ENCODE measurements at regions of chr6 and their contacts with region 1.

Region 1: GRCh38 chr6:108630050-108630714 is 69.5 kb downstream of the FOXO3 start:
- DNase-seq: no peak
- H3K4me3 Mint-ChIP-seq: peak overlapping the region; percentile 0
- H3K27ac Mint-ChIP-seq: peak overlapping the region; percentile 26
- H3K4me1 Mint-ChIP-seq: peaks cover 34% of the 10 kb centered on the region
- H3K27me3 Mint-ChIP-seq: peaks cover 11% of the 10 kb centered on the region

Region 2: DNA sequence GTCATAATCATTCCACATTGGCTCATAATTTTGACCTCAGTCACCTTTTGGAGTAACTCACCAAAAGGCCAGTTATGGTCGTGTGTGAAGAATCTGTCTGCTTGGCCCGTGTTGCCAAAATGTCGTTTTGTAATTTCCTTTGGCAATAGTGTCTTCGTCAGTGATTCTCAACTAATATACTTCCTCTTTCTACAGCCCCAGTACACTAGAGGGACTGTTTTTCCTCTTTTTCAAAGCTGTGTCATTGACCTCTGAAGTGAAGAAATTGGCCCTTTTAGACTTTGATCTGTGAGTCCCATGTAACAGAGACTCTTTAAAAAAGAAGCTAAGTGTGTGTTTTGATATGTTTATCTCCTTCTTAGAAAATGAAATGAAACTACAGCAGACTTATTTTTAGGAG is 64.3 kb before region 1 on chr6:
- intact Hi-C with region 1: loop called (anchors 2 kb)
- DNase-seq: no peak
- H3K4me3 Mint-ChIP-seq: no peak overlapping the region
- H3K27ac Mint-ChIP-seq: no peak overlapping the region
- H3K4me1 Mint-ChIP-seq: peaks cover 43% of the 10 kb centered on the region
- H3K27me3 Mint-ChIP-seq: peaks cover 30% of the 10 kb centered on the region

Region 3: GRCh38 chr6:108655806-108656651 is 25.8 kb after region 1 on chr6:
- intact Hi-C with region 1: no loop called
- DNase-seq: no peak
- H3K4me3 Mint-ChIP-seq: no peak overlapping the region
- H3K27ac Mint-ChIP-seq: no peak overlapping the region
- H3K4me1 Mint-ChIP-seq: peaks cover 6% of the 10 kb centered on the region
- H3K27me3 Mint-ChIP-seq: peaks cover 4% of the 10 kb centered on the region

Region 4: GRCh38 chr6:108667993-108668392 is 37.8 kb after region 1 on chr6:
- intact Hi-C with region 1: loop called (anchors 5 kb)
- DNase-seq: no peak
- H3K4me3 Mint-ChIP-seq: no peak overlapping the region
- H3K27ac Mint-ChIP-seq: no peak overlapping the region
- H3K4me1 Mint-ChIP-seq: peaks cover 18% of the 10 kb centered on the region
- H3K27me3 Mint-ChIP-seq: peaks cover 2% of the 10 kb centered on the region